Posterior vena cava (tissue), 2 donors: ENCODE measurements at regions of chr9 and their contacts with region 1.

Region 1: DNA sequence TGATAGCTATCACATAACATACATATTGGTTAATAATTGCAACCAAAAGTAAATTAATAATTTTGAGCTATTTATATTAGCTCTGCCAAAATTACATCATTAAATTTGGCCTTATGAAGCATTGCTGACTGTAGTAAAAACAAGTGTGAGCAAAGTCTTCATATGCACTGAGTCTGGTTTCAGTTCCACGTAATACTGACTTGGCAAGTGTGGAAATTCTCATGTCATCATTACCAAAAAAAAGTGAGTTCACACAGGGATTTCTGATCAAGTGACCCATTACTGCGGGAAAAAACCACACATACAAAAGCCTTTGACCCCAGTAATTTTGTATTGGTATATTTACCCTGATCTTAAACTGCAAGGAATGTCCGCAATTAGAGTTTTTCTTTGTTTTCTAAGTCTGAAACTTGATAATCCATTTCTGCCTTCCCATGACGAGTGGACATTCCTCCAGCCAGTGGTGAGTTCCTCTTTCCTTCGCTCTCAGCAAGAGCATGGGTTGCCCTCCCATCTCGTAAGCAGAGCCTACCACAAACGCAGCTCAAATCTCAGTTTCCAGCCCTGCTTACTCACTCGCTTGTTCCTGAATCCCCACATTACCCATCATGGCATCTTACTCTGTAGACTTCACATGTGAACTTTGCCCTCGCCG is 220.2 kb upstream of the DMRT1 start:
- DNase-seq: no peak

Region 2: DNA sequence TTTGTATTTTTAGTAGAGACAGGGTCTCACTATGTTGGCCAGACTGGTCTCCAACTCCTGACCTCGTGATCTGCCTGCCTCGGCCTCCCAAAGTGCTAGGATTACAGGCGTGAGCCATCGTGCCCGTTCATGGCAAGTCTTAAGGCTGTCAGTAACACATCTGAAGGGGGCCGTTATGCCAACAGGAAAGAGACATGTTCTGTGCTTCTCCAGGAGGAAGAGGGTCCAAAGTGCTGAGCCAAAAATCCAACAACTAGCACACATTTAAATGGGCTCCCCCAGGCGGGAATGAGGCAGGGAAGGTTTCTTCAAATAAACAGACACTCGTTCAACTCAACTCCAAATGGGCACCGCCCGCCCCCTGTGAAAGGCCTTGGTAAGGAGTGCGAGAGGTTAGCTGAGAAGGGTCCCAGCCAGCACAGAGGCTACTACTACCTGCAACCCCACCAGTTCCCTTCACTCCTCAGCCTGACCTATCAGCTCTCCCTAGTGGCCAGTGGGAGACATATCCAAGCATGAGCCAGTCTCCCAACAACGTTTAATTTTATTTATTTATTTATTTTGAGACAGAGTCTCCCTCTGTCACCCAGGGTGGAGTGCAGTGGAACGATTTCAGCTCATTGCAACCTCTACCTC is 136.0 kb after region 1 on chr9:
- intact Hi-C with region 1: loop called in 1 of 2 experiments (anchors 5 kb)
- DNase-seq: no peak

Region 3: GRCh38 chr9:942805-943580 is 321.7 kb after region 1 on chr9:
- intact Hi-C with region 1: no loop called
- DNase-seq: no peak

Region 4: GRCh38 chr9:1929722-1930621 is 1308.6 kb after region 1 on chr9:
- intact Hi-C with region 1: loop called in 1 of 2 experiments (anchors 5 kb)
- DNase-seq: no peak